ENCODE measurements at regions of chr5 and their contacts with region 1.

Region 1: GRCh38 chr5:148374692-148375360 is 8.9 kb upstream of the FBXO38 start:
- DNase-seq: peak in 4 of 5 donors; percentile 6 to 27 (median 17)
- H3K4me3 ChIP-seq: no peak overlapping the region
- H3K4me3 Mint-ChIP-seq: no peak overlapping the region
- H3K27ac ChIP-seq: no peak overlapping the region
- H3K27ac Mint-ChIP-seq: no peak overlapping the region
- H3K4me1 ChIP-seq: no peaks in the 10 kb centered on the region
- H3K4me1 Mint-ChIP-seq: peaks cover 0 to 8% (median 4%) of the 10 kb centered on the region in 4 donors
- H3K27me3 ChIP-seq: no peaks in the 10 kb centered on the region
- H3K27me3 Mint-ChIP-seq: peaks cover 0 to under 1% of the 10 kb centered on the region in 2 donors

Region 2: GRCh38 chr5:148179234-148179824 is 195.5 kb before region 1 on chr5:
- CTCF ChIA-PET with region 1: interaction called, 14 read pairs
- POLR2A ChIA-PET with region 1: no interaction called
- intact Hi-C with region 1: no loop called
- DNase-seq: peak; percentile 28 to 45 (median 38)
- H3K4me3 ChIP-seq: no peak overlapping the region
- H3K4me3 Mint-ChIP-seq: no peak overlapping the region
- H3K27ac ChIP-seq: no peak overlapping the region
- H3K27ac Mint-ChIP-seq: no peak overlapping the region
- H3K4me1 ChIP-seq: no peaks in the 10 kb centered on the region
- H3K4me1 Mint-ChIP-seq: no peaks in the 10 kb centered on the region
- H3K27me3 ChIP-seq: no peaks in the 10 kb centered on the region
- H3K27me3 Mint-ChIP-seq: peaks cover 2 to 4% of the 10 kb centered on the region in 2 donors

Region 3: GRCh38 chr5:148290271-148291195 is 84.3 kb before region 1 on chr5:
- CTCF ChIA-PET with region 1: interaction called, 6 read pairs
- POLR2A ChIA-PET with region 1: no interaction called
- intact Hi-C with region 1: loop called (anchors 1 kb)
- DNase-seq: no peak
- H3K4me3 ChIP-seq: no peak overlapping the region
- H3K4me3 Mint-ChIP-seq: no peak overlapping the region
- H3K27ac ChIP-seq: no peak overlapping the region
- H3K27ac Mint-ChIP-seq: no peak overlapping the region
- H3K4me1 ChIP-seq: no peaks in the 10 kb centered on the region
- H3K4me1 Mint-ChIP-seq: no peaks in the 10 kb centered on the region
- H3K27me3 ChIP-seq: no peaks in the 10 kb centered on the region
- H3K27me3 Mint-ChIP-seq: peaks cover 0 to 3% of the 10 kb centered on the region in 2 donors

Region 4: DNA sequence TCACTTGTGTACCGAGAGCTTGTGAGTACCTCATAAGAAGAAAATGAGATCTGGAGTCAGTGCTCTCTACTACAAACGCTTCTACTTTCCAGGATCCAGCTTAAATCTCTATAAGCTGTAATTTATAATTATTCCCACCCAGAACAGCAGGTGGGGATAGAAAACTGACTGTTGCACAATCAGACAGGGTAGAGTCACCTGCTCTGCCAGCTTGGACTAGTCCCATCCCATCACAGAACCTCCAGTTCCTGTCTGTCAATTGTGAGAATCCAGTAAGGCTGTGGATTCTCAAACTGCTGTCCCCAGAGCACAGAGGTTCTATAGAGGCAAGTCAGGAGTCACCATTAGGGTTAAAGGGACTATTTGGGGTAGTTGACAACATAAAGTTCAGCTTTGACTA is 60.6 kb before region 1 on chr5:
- CTCF ChIA-PET with region 1: interaction called, 15 read pairs
- POLR2A ChIA-PET with region 1: no interaction called
- intact Hi-C with region 1: loop called (anchors 1 kb)
- DNase-seq: no peak
- H3K4me3 ChIP-seq: no peak overlapping the region
- H3K4me3 Mint-ChIP-seq: no peak overlapping the region
- H3K27ac ChIP-seq: no peak overlapping the region
- H3K27ac Mint-ChIP-seq: no peak overlapping the region
- H3K4me1 ChIP-seq: no peaks in the 10 kb centered on the region
- H3K4me1 Mint-ChIP-seq: no peaks in the 10 kb centered on the region
- H3K27me3 ChIP-seq: no peaks in the 10 kb centered on the region
- H3K27me3 Mint-ChIP-seq: no peaks in the 10 kb centered on the region

Region 5: DNA sequence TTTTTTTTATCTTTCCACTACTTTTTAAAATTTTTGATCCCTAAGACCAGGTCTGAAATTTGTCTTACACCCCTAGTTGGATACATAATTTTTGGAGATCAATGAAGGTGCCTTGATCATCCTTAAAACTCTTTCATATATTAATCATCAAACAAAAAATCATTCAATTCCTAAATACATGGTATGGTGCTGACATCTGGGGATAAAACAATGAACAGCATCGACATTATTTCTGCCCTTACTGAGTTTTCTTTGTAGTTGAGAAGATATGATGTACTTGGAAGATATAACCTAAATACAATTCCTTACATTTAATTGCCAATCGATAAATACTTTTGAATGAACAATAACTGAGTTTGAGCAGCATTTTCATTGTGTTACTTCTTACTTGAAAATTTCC is 21.2 kb before region 1 on chr5:
- CTCF ChIA-PET with region 1: no interaction called
- POLR2A ChIA-PET with region 1: no interaction called
- intact Hi-C with region 1: no loop called
- DNase-seq: no peak
- H3K4me3 ChIP-seq: no peak overlapping the region
- H3K4me3 Mint-ChIP-seq: no peak overlapping the region
- H3K27ac ChIP-seq: no peak overlapping the region
- H3K27ac Mint-ChIP-seq: no peak overlapping the region
- H3K4me1 ChIP-seq: no peaks in the 10 kb centered on the region
- H3K4me1 Mint-ChIP-seq: no peaks in the 10 kb centered on the region
- H3K27me3 ChIP-seq: no peaks in the 10 kb centered on the region
- H3K27me3 Mint-ChIP-seq: no peaks in the 10 kb centered on the region

Measured in CD4-positive, alpha-beta memory T cell (primary cell).